ENCODE measurements at regions of chr22 and their contacts with region 1.

Region 1: GRCh38 chr22:21641789-21642583 is at the start of gene SDF2L1:
- DNase-seq: peak; percentile 99
- ATAC-seq: peak; percentile 94
- H3K4me3 Mint-ChIP-seq: peak within 1 kb of the TSS; percentile 83
- H3K27ac Mint-ChIP-seq: peak within 1 kb of the TSS; percentile 84
- H3K4me1 Mint-ChIP-seq: peaks cover 16% of the 10 kb centered on the region
- H3K27me3 Mint-ChIP-seq: peaks cover 17% of the 10 kb centered on the region
- CTCF ChIP-seq: no peak
- total RNA-seq, gene SDF2L1: 52.2 to 73.6 TPM (median 57.0 TPM) in 3 replicates

Region 2: DNA sequence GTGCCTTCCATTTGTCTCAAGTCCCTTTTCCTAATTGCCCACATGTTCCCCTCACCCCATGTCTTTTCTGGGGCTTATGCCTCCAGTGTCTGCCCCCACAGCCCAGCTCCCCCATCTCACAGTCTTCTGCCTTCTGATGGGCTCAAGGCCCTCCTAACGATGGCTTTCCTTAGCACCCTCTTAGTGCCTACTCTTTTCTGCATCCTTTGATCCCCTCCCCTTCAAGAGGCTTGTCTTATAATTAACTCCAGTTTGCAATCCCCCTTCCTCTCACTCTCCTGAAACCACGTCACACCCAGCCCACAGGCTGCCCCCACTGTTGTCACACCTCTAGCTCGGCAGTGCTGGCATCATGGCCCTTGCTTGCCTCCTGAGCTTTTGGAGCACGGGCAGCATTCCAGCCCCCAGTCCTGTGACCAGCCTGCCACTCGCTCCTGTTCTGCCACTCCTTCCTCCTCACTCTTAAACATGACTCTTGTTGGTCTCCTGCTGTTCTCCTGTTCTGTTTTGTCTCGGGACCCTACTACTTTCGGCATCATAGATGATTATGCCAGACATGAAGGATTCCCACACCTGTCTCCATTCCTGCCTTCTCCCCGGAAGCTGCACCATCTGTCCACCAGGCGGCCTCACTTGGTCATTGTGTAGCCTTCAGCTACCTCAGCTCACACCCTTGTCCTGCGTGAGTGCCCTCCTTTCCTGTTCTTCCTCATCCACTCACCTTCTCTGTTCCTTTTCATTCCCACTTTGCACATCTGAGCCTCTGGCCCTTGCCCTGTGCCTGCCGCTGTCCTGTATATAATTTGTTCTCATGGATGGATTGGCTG is 48.4 kb before region 1 on chr22:
- CTCF ChIA-PET with region 1: interaction called, 38 read pairs
- POLR2A ChIA-PET with region 1: no interaction called
- DNase-seq: peak; percentile 51
- ATAC-seq: peak; percentile 91
- H3K4me3 Mint-ChIP-seq: no peak overlapping the region
- H3K27ac Mint-ChIP-seq: peak overlapping the region; percentile 21
- H3K4me1 Mint-ChIP-seq: peaks cover 14% of the 10 kb centered on the region
- H3K27me3 Mint-ChIP-seq: no peaks in the 10 kb centered on the region; the same call in 1 of the 2 replicates
- CTCF ChIP-seq: peak; percentile 40; the same call in 1 of the 2 replicates

Region 3: DNA sequence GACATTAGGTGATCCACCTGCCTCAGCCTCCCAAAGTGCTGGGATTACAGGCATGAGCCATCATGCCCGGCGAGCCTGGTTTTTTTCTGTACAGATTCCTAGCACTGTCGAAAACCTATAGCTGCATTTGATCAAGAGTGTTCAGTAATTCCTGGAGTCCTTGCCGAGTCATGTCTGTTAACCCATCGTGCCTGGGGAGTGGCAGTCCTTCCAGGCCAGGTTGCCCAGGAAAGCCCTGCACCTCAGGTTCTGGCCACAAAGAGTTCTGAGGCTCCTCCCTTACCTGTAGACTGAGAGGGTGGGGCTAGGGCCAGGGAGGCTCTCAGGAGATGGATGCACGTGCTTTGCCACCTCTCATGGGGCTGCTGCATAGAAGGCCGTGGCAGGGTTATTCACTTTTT is 29.1 kb before region 1 on chr22:
- CTCF ChIA-PET with region 1: interaction called, 20 read pairs
- POLR2A ChIA-PET with region 1: no interaction called
- DNase-seq: peak; percentile 32
- ATAC-seq: peak; percentile 87
- H3K4me3 Mint-ChIP-seq: no peak overlapping the region
- H3K27ac Mint-ChIP-seq: no peak overlapping the region
- H3K4me1 Mint-ChIP-seq: no peaks in the 10 kb centered on the region
- H3K27me3 Mint-ChIP-seq: no peaks in the 10 kb centered on the region
- CTCF ChIP-seq: no peak

Region 4: GRCh38 chr22:21629262-21630149 is 12.5 kb before region 1 on chr22 and contains the start of gene YDJC:
- CTCF ChIA-PET with region 1: interaction called, 273 read pairs
- POLR2A ChIA-PET with region 1: interaction called, 22 read pairs
- DNase-seq: peak; percentile 97
- ATAC-seq: peak; percentile 78
- H3K4me3 Mint-ChIP-seq: peak within 1 kb of the TSS; percentile 80
- H3K27ac Mint-ChIP-seq: 0 out of 2 replicates have a peak within 1 kb of the TSS, but pooled peaks have one; percentile 19
- H3K4me1 Mint-ChIP-seq: peaks cover 19% of the 10 kb centered on the region
- H3K27me3 Mint-ChIP-seq: peaks cover 11% of the 10 kb centered on the region
- CTCF ChIP-seq: no peak; the same call in 1 of the 2 replicates
- total RNA-seq, gene YDJC: 39.1 to 42.1 TPM (median 39.8 TPM) in 3 replicates

Region 5: DNA sequence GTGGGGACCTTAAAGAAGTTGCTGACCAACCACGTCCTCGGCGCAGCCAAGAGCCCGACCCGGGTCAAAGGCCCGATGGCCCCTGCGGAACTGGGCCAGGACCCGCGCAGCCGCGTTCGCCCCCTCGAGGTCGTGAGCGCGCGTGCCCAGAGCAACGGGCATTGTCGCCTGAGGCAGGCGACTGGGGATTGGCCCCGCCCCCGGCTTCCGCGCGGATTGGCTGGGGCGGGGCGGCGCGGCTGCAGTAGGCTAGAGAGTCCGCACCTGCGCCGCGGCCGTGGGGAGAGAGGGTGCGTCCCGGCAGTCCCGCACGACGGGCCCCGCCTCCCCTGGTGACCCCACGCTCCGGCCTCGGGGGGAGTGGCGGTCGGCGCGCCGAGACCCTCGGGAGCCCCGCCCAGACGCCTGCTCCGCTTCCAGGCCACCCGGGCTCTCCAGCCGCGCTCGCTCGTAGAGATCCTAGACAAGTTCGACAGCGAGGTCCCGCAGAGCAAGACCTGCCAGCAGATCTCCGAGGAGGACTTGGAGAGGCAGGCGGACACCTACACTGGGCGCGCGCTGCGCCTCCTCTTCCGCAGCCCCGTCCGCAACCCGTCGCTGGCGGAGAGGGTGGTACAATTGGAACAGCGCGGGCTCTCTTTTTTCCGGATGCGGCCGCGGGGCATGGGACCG is 15.5 kb after region 1 on chr22:
- CTCF ChIA-PET with region 1: interaction called, 40 read pairs
- POLR2A ChIA-PET with region 1: interaction called, 11 read pairs
- DNase-seq: peak; percentile 80
- ATAC-seq: peak; percentile 69
- H3K4me3 Mint-ChIP-seq: peak overlapping the region; percentile 87
- H3K27ac Mint-ChIP-seq: peak overlapping the region; percentile 96
- H3K4me1 Mint-ChIP-seq: peaks cover 21% of the 10 kb centered on the region
- H3K27me3 Mint-ChIP-seq: peaks cover 12% of the 10 kb centered on the region
- CTCF ChIP-seq: no peak

Region 6: DNA sequence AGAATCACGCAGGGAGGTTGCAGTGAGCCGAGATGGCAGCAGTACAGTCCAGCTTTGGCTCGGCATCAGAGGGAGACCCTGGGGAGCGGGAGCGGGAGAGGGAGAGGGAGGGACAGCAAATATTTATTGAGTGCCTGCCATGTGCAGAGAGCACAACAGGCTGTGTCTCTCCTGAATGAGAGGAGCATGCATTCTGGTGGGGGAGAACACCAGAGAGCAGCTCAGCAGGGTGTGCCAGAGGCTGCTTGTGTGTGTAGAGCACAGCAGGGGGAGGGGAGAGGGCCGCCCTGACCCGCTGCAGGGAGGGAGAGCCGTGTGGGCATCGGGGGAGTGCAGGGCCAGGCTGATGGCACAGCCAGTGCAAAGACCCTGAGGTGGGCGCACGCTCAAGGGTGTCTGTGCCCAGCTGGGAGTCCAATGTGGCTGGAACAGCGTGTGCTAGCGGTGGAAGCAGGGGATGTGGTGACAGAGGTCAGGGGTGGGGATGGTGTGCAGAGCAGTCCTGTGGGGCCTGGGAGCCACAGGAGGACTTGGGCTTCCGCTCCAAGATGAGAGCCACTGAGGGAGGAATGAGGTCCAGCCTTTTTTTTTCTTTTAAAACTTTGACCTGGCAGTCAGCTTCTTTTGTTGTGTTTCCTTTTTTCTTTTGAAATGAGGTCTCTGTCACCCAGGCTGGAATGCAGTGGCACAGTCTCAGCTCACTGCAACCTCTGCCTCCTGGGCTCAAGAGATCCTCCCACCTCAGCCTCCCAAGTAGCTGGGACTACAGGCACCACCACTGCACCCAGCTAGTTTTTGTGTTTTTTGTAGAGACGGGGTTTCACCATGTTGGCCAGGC is 35.8 kb after region 1 on chr22:
- CTCF ChIA-PET with region 1: no interaction called
- POLR2A ChIA-PET with region 1: no interaction called
- DNase-seq: no peak
- ATAC-seq: no peak
- H3K4me3 Mint-ChIP-seq: no peak overlapping the region
- H3K27ac Mint-ChIP-seq: no peak overlapping the region
- H3K4me1 Mint-ChIP-seq: no peaks in the 10 kb centered on the region
- H3K27me3 Mint-ChIP-seq: no peaks in the 10 kb centered on the region
- CTCF ChIP-seq: no peak

Region 7: GRCh38 chr22:21735200-21736076 is 93.5 kb after region 1 on chr22 and contains the start of gene YPEL1:
- CTCF ChIA-PET with region 1: interaction called, 11 read pairs
- POLR2A ChIA-PET with region 1: no interaction called
- DNase-seq: peak; percentile 97
- ATAC-seq: peak; percentile 92
- H3K4me3 Mint-ChIP-seq: peak within 1 kb of the TSS; percentile 85
- H3K27ac Mint-ChIP-seq: peak within 1 kb of the TSS; percentile 47
- H3K4me1 Mint-ChIP-seq: peaks cover 17% of the 10 kb centered on the region
- H3K27me3 Mint-ChIP-seq: peaks cover 56% of the 10 kb centered on the region
- CTCF ChIP-seq: no peak
- total RNA-seq, gene YPEL1: 7.7 to 17.7 TPM (median 15.5 TPM) in 3 replicates

Region 8: GRCh38 chr22:21849489-21849888 is 207.5 kb after region 1 on chr22:
- CTCF ChIA-PET with region 1: no interaction called
- POLR2A ChIA-PET with region 1: no interaction called
- DNase-seq: no peak
- ATAC-seq: no peak
- H3K4me3 Mint-ChIP-seq: no peak overlapping the region
- H3K27ac Mint-ChIP-seq: no peak overlapping the region
- H3K4me1 Mint-ChIP-seq: peaks cover 9% of the 10 kb centered on the region; the same call in 1 of the 2 replicates
- H3K27me3 Mint-ChIP-seq: peaks cover 2% of the 10 kb centered on the region; the same call in 1 of the 2 replicates
- CTCF ChIP-seq: no peak

Region 9: DNA sequence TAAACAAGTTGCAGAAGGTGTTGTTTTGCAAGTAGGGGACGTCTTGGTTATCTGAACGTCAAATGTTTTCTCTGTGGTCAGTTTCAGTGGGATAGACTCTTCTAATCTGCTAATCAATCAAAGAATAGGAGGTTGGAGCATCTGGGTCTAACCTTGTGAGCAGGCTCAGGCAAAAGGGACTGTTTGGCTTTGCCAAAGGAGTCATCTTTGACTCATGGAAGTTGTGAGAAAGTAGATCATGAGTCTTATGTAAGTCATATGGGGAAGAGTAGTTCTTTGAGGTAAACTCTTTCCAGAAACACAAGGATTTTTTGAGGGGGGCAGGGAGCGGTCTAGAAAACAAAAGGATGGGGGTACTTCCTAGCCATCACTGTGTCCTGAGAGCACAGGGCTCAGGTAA is 367.7 kb after region 1 on chr22:
- CTCF ChIA-PET with region 1: no interaction called
- POLR2A ChIA-PET with region 1: no interaction called
- DNase-seq: no peak
- ATAC-seq: no peak
- H3K4me3 Mint-ChIP-seq: no peak overlapping the region
- H3K27ac Mint-ChIP-seq: no peak overlapping the region
- H3K4me1 Mint-ChIP-seq: peaks cover 5% of the 10 kb centered on the region
- H3K27me3 Mint-ChIP-seq: peaks cover 94% of the 10 kb centered on the region
- CTCF ChIP-seq: no peak

Measured in WTC11 (cell line).